Tibial artery (tissue), 4 donors: ENCODE measurements at regions of chr3 and their contacts with region 1.

Region 1: DNA sequence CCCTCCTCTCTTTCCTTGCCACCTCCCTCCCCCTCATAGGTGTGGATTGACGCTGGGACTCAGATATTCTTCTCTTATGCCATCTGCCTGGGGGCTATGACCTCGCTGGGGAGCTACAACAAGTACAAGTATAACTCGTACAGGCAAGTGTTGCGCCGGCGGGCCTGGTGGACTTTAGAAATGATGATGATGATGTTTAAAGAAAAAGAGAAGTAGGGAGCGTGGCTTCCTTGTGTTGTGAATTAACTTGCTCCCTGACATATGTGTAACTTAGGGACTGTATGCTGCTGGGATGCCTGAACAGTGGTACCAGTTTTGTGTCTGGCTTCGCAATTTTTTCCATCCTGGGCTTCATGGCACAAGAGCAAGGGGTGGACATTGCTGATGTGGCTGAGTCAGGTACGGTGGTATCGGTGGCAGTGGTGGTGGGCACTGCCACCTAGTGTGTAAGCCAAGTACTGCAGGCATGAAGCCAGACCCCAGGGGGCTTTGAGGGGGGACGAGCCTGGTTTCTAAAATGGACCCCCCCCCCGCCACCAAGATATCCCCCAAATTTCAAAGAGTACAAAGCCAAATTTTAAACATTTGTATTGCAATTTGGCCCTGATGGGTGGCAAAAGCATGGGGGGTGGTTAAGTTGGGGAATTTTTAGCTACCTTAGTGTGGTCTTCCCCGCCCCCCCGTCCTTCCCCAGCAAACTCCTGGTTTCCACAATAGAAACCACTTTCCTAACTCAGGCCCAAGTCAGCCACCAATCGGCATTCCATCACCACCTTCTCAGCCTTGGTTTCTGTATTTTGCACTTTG is 65.6 kb downstream of the SLC6A6 start:
- DNase-seq: no peak
- H3K4me3 ChIP-seq: no peak overlapping the region
- H3K27ac ChIP-seq: no peak overlapping the region
- H3K4me1 ChIP-seq: peaks cover 0 to 7% (median 0%) of the 10 kb centered on the region in 4 donors
- H3K27me3 ChIP-seq: no peaks in the 10 kb centered on the region
- CTCF ChIP-seq: peak; percentile 93 to 97

Region 2: GRCh38 chr3:14203521-14204079 is 264.4 kb before region 1 on chr3:
- intact Hi-C with region 1: loop called (anchors 5 kb)
- DNase-seq: peak; percentile 51 to 77
- H3K4me3 ChIP-seq: no peak overlapping the region
- H3K27ac ChIP-seq: no peak overlapping the region
- H3K4me1 ChIP-seq: peaks cover 0 to 23% (median 14%) of the 10 kb centered on the region in 4 donors
- H3K27me3 ChIP-seq: no peaks in the 10 kb centered on the region
- CTCF ChIP-seq: peak; percentile 78 to 81